ENCODE measurements at regions of chr1 and their contacts with region 1.

Region 1: DNA sequence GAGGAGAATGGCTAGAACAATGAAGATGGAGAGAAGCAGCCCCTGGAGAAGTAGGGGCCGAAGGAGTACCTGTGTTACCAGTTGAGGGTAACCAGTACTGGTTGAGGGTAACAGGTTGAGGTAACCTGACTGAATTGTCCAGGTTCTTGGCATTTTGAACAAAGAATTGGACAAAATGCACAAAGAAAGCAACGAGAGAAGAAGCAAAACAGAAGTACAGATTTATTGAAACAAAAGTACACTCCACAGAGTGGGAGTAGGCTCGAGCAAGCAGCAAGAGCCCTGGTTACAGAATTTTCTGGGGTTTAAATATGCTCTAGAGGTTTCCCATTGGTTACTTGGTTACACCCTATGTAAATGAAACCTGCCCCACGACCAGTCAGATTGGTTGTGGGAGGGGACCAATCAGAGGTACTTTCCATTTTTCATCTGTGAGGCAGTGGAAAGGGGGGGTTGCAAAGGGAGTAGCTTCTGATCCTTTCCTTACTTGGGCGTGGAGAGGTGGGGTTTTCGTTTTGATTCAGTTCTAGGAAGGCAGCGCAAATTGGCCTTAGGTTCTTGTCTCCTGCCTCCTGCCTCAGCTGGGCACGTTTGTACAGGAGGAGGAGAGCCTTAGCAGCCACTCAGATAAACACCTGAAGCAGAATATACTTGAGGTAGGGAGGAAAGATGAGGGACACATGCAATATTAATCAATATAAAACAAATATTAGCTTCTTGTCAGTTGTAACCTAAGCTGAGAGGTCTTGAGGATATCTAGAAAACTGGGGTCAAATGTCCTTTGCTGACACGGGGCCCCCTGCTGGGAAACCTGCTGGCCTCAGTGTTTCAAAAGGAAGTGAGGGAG is 14.2 kb upstream of the LSM10 start:
- DNase-seq: no peak
- ATAC-seq: no peak

Region 2: GRCh38 chr1:35557292-35558063 is 854.4 kb before region 1 on chr1 and contains the starts of genes KIAA0319L and NCDN:
- intact Hi-C with region 1: no loop called
- DNase-seq: peak; percentile 98
- ATAC-seq: peak; percentile 94
- total RNA-seq, gene KIAA0319L: 77.9 TPM
- total RNA-seq, gene NCDN: 24.5 TPM

Region 3: GRCh38 chr1:36099681-36100341 is 312.1 kb before region 1 on chr1:
- intact Hi-C with region 1: loop called (anchors 10 kb)
- DNase-seq: peak; percentile 89
- ATAC-seq: peak; percentile 89